K562 (cell line): ENCODE measurements at regions of chr14 and their contacts with region 1.

Region 1: DNA sequence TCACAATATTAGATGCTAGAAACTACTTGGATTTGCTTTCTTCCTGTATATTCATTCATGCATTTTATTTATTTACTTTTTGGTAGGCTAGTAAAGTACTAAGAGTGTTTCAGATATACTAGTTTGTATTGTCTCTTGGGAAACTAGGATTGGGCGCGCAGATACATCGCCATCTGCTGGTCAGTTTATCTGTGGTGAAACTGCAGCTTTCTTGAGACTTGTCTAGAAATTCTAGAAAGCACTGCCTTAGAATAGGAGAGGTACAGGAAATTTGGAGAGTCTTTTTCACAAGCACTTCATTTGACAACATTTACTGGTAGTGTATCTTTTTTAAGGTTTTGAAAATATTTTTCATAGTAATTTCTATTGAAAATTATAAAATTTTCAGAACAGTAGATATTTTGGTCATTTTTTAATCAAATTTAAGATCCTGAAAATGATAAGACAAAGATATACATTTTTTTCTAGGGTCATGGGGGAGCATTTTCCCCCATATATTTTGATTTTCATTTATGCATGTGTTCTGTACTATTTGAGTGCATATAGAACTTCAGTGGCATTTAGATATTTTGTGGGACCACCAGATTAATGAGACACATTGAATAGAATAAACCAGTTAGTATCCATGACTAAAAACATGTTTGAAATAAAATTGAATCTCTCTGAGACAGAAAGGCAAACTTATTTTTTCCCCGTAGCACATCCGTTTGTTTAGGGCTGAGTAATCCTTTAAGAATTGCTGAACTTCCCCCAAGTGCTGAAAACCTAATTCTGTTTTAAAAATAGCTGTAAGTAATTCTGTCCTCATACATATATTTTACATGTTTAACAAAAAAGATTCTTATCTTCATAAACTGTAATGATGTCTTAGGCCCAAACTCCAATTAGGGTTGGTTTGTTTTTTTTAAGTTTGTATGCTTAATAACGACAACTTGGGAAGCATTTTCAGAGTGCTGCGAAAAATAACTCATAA is 44.5 kb downstream of the SLC38A6 start:
- DNase-seq: peak; percentile 22 to 71 (median 30)
- ATAC-seq: peak; percentile 84
- H3K4me3 ChIP-seq: no peak overlapping the region
- H3K27ac ChIP-seq: no peak overlapping the region
- H3K4me1 ChIP-seq: no peaks in the 10 kb centered on the region
- H3K27me3 ChIP-seq: no peaks in the 10 kb centered on the region
- CTCF ChIP-seq: peak; percentile 57 to 72 (median 70)
- EP300 ChIP-seq: no peak
- POLR2A ChIP-seq: no peak
- RAD21 ChIP-seq: peak; percentile 75 to 78

Region 2: GRCh38 chr14:60622917-60623257 is 402.6 kb before region 1 on chr14:
- CTCF ChIA-PET with region 1: interaction called, 12 read pairs
- POLR2A ChIA-PET with region 1: no interaction called
- in situ Hi-C with region 1: loop called (anchors 5 kb)
- intact Hi-C with region 1: loop called (anchors 1 kb)
- DNase-seq: no peak
- ATAC-seq: no peak
- H3K4me3 ChIP-seq: no peak overlapping the region
- H3K27ac ChIP-seq: no peak overlapping the region
- H3K4me1 ChIP-seq: no peaks in the 10 kb centered on the region
- H3K27me3 ChIP-seq: no peaks in the 10 kb centered on the region; a peak in 1 of 5 replicates
- CTCF ChIP-seq: no peak
- EP300 ChIP-seq: no peak
- POLR2A ChIP-seq: no peak
- RAD21 ChIP-seq: no peak

Region 3: DNA sequence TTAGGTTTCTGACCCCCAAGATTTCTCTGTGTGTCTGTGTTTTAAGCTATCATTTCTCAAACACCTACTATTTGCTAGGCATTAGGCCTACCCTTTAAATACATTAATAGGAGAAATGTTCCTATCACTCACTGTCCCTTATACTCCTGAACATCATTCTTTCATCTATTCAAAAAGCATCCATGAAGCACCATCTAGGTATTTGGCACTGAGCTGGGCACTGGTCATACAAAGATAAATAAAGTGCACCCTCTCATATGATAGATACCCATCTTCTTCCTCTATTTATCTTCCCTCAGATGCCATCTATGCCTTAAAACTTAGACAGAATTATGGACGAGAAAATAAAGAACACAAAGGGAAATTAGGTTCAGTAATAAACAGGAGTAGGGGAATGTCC is 396.6 kb before region 1 on chr14:
- CTCF ChIA-PET with region 1: interaction called, 12 read pairs
- POLR2A ChIA-PET with region 1: no interaction called
- in situ Hi-C with region 1: loop called (anchors 5 kb)
- intact Hi-C with region 1: loop called (anchors 1 kb)
- DNase-seq: no peak
- ATAC-seq: no peak
- H3K4me3 ChIP-seq: no peak overlapping the region
- H3K27ac ChIP-seq: no peak overlapping the region
- H3K4me1 ChIP-seq: no peaks in the 10 kb centered on the region
- H3K27me3 ChIP-seq: no peaks in the 10 kb centered on the region
- CTCF ChIP-seq: no peak
- EP300 ChIP-seq: no peak
- POLR2A ChIP-seq: no peak
- RAD21 ChIP-seq: no peak

Region 4: GRCh38 chr14:60724137-60724619 is 301.4 kb before region 1 on chr14 and contains the start of gene SIX4:
- CTCF ChIA-PET with region 1: no interaction called
- POLR2A ChIA-PET with region 1: no interaction called
- in situ Hi-C with region 1: no loop called
- intact Hi-C with region 1: loop called (anchors 5 kb)
- DNase-seq: peak; percentile 82 to 87 (median 84)
- ATAC-seq: peak; percentile 94
- H3K4me3 ChIP-seq: peak within 1 kb of the TSS; percentile 67
- H3K27ac ChIP-seq: peak within 1 kb of the TSS; percentile 81
- H3K4me1 ChIP-seq: peaks cover 3 to 27% of the 10 kb centered on the region in 2 experiments; a peak in 4 of 5 replicates
- H3K27me3 ChIP-seq: no peaks in the 10 kb centered on the region
- CTCF ChIP-seq: no peak
- EP300 ChIP-seq: no peak
- POLR2A ChIP-seq: peak; percentile 88
- RAD21 ChIP-seq: no peak
- polyA plus RNA-seq, gene SIX4: 0.77 to 1.1 TPM

Region 5: GRCh38 chr14:60945984-60946383 is 79.6 kb before region 1 on chr14:
- CTCF ChIA-PET with region 1: no interaction called
- POLR2A ChIA-PET with region 1: no interaction called
- in situ Hi-C with region 1: no loop called
- intact Hi-C with region 1: no loop called
- DNase-seq: no peak
- ATAC-seq: no peak
- H3K4me3 ChIP-seq: no peak overlapping the region
- H3K27ac ChIP-seq: no peak overlapping the region
- H3K4me1 ChIP-seq: no peaks in the 10 kb centered on the region
- H3K27me3 ChIP-seq: no peaks in the 10 kb centered on the region
- CTCF ChIP-seq: no peak
- EP300 ChIP-seq: no peak
- POLR2A ChIP-seq: no peak
- RAD21 ChIP-seq: no peak

Region 6: GRCh38 chr14:60980811-60981632 is 44.5 kb before region 1 on chr14 and contains the starts of genes SLC38A6 and TRMT5:
- CTCF ChIA-PET with region 1: no interaction called
- POLR2A ChIA-PET with region 1: no interaction called
- in situ Hi-C with region 1: no loop called
- intact Hi-C with region 1: loop called (anchors 5 kb)
- DNase-seq: peak; percentile 84 to 91 (median 84)
- ATAC-seq: peak; percentile 87
- H3K4me3 ChIP-seq: peak within 1 kb of the TSS; percentile 84
- H3K27ac ChIP-seq: peak within 1 kb of the TSS; percentile 86
- H3K4me1 ChIP-seq: peaks cover 0 to 8% of the 10 kb centered on the region in 2 experiments; a peak in 3 of 5 replicates
- H3K27me3 ChIP-seq: no peaks in the 10 kb centered on the region
- CTCF ChIP-seq: no peak
- EP300 ChIP-seq: peak; percentile 10; the same call in 1 of the 2 replicates
- POLR2A ChIP-seq: peak; percentile 82
- RAD21 ChIP-seq: no peak
- polyA plus RNA-seq, gene SLC38A6: 34.6 to 38.7 TPM
- polyA plus RNA-seq, gene TRMT5: 17.3 to 20.0 TPM

Region 7: GRCh38 chr14:61252369-61253063 is 227.0 kb after region 1 on chr14:
- CTCF ChIA-PET with region 1: no interaction called
- POLR2A ChIA-PET with region 1: no interaction called
- in situ Hi-C with region 1: no loop called
- intact Hi-C with region 1: loop called (anchors 5 kb)
- DNase-seq: peak; percentile 59 to 72 (median 62)
- ATAC-seq: peak; percentile 98
- H3K4me3 ChIP-seq: no peak overlapping the region
- H3K27ac ChIP-seq: no peak overlapping the region
- H3K4me1 ChIP-seq: no peaks in the 10 kb centered on the region
- H3K27me3 ChIP-seq: peaks cover 0 to 9% of the 10 kb centered on the region in 2 experiments; a peak in 3 of 5 replicates
- CTCF ChIP-seq: peak; percentile 72 to 79 (median 73)
- EP300 ChIP-seq: no peak
- POLR2A ChIP-seq: no peak
- RAD21 ChIP-seq: peak; percentile 84 to 89